IMR-90 (cell line): ENCODE measurements at regions of chr19 and their contacts with region 1.

Region 1: DNA sequence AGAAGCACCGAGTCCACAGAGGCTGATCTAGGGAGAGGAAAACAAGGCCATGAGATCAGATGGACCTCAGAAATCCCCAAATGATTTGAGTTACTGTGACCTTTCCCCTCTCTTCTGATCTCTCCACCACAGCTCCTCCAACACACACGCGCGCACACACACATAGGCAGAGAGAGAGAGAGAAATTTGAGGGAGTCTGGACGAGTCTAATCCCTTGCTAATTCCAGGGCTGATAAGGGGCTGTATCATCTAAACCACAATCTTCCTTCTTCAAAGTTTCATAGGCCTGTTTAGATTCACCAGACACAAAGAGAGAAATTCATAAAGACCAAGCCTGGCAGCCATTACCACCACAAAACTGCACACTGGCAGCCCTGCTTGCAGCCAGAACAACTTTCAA is 8.6 kb downstream of the ZFP82 start:
- DNase-seq: no peak
- ATAC-seq: no peak
- H3K4me3 ChIP-seq: no peak overlapping the region
- H3K27ac ChIP-seq: no peak overlapping the region
- H3K4me1 ChIP-seq: no peaks in the 10 kb centered on the region
- H3K27me3 ChIP-seq: no peaks in the 10 kb centered on the region
- CTCF ChIP-seq: no peak
- POLR2A ChIP-seq: no peak
- RAD21 ChIP-seq: no peak

Region 2: GRCh38 chr19:35193869-35194665 is 1215.8 kb before region 1 on chr19:
- CTCF ChIA-PET with region 1: interaction called, 10 read pairs
- POLR2A ChIA-PET with region 1: no interaction called
- dilution Hi-C with region 1: no loop called
- in situ Hi-C with region 1: no loop called
- intact Hi-C with region 1: no loop called
- DNase-seq: no peak
- ATAC-seq: no peak
- H3K4me3 ChIP-seq: no peak overlapping the region
- H3K27ac ChIP-seq: no peak overlapping the region
- H3K4me1 ChIP-seq: no peaks in the 10 kb centered on the region
- H3K27me3 ChIP-seq: no peaks in the 10 kb centered on the region; the same call in 1 of the 2 replicates
- CTCF ChIP-seq: no peak
- POLR2A ChIP-seq: no peak
- RAD21 ChIP-seq: no peak

Region 3: GRCh38 chr19:36267061-36267845 is 142.6 kb before region 1 on chr19:
- CTCF ChIA-PET with region 1: no interaction called
- POLR2A ChIA-PET with region 1: no interaction called
- dilution Hi-C with region 1: no loop called
- in situ Hi-C with region 1: no loop called
- intact Hi-C with region 1: no loop called
- DNase-seq: no peak
- ATAC-seq: no peak
- H3K4me3 ChIP-seq: no peak overlapping the region
- H3K27ac ChIP-seq: no peak overlapping the region
- H3K4me1 ChIP-seq: no peaks in the 10 kb centered on the region
- H3K27me3 ChIP-seq: no peaks in the 10 kb centered on the region
- CTCF ChIP-seq: no peak
- POLR2A ChIP-seq: no peak
- RAD21 ChIP-seq: no peak

Region 4: DNA sequence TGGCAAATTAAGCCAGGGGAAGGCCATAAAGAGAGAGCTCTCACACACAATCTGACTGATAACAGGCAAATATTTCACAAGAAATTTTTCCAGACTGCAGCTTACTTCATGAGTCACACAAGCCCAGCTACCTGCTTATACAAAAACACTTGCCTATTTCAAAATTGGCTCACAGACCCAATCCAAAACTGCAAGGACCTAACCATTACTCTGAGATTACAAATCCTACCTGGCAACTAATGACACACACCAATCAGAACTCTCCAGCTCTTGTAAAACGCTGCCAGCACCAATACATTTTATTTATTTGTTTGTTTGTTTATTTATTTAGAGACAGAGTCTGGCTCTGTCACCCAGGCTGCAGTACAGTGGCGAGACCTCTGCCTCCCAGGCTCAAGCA is 26.7 kb after region 1 on chr19:
- CTCF ChIA-PET with region 1: no interaction called
- POLR2A ChIA-PET with region 1: no interaction called
- dilution Hi-C with region 1: no loop called
- in situ Hi-C with region 1: no loop called
- intact Hi-C with region 1: no loop called
- DNase-seq: no peak
- ATAC-seq: no peak
- H3K4me3 ChIP-seq: no peak overlapping the region
- H3K27ac ChIP-seq: no peak overlapping the region
- H3K4me1 ChIP-seq: no peaks in the 10 kb centered on the region
- H3K27me3 ChIP-seq: no peaks in the 10 kb centered on the region
- CTCF ChIP-seq: no peak
- POLR2A ChIP-seq: no peak
- RAD21 ChIP-seq: no peak